ENCODE measurements at regions of chr19 and their contacts with region 1.

Region 1: GRCh38 chr19:45092747-45093678 is at the start of gene PPP1R37:
- DNase-seq: peak; percentile 71 to 95
- H3K4me3 ChIP-seq: peak within 1 kb of the TSS; percentile 96 to 99
- H3K27ac ChIP-seq: peak within 1 kb of the TSS; percentile 83 to 88
- H3K4me1 ChIP-seq: peaks cover 19 to 24% of the 10 kb centered on the region in 2 donors
- H3K27me3 ChIP-seq: no peaks in the 10 kb centered on the region
- CTCF ChIP-seq: peak in 2 of 3 experiments; percentile 40 to 62
- total RNA-seq, gene PPP1R37: 17.6 TPM

Region 2: GRCh38 chr19:44954824-44955586 is 138.0 kb before region 1 on chr19 and contains the start of gene CLPTM1:
- intact Hi-C with region 1: loop called (anchors 2 kb)
- DNase-seq: peak; percentile 87 to 98
- H3K4me3 ChIP-seq: peak within 1 kb of the TSS; percentile 73 to 98
- H3K27ac ChIP-seq: peak within 1 kb of the TSS; percentile 89 to 91
- H3K4me1 ChIP-seq: peaks cover 10 to 30% of the 10 kb centered on the region in 2 donors
- H3K27me3 ChIP-seq: no peaks in the 10 kb centered on the region
- CTCF ChIP-seq: peak in 1 of 3 experiments; percentile 28
- total RNA-seq, gene CLPTM1: 65.2 TPM

Region 3: GRCh38 chr19:45038931-45039893 is 53.8 kb before region 1 on chr19 and contains the start of gene CLASRP:
- intact Hi-C with region 1: loop called (anchors 1 kb)
- DNase-seq: peak; percentile 65 to 94
- H3K4me3 ChIP-seq: peak within 1 kb of the TSS; percentile 83 to 86
- H3K27ac ChIP-seq: peak within 1 kb of the TSS; percentile 91 to 96
- H3K4me1 ChIP-seq: peaks cover 5 to 22% of the 10 kb centered on the region in 2 donors
- H3K27me3 ChIP-seq: no peaks in the 10 kb centered on the region
- CTCF ChIP-seq: no peak
- total RNA-seq, gene CLASRP: 103 TPM

Region 4: GRCh38 chr19:45079063-45079910 is 13.7 kb before region 1 on chr19 and contains the start of gene GEMIN7:
- intact Hi-C with region 1: loop called (anchors 1 kb)
- DNase-seq: peak in 1 of 2 donors; percentile 84
- H3K4me3 ChIP-seq: peak within 1 kb of the TSS; percentile 86 to 91
- H3K27ac ChIP-seq: peak within 1 kb of the TSS in 1 of 2 donors; percentile 15
- H3K4me1 ChIP-seq: peaks cover 7 to 10% of the 10 kb centered on the region in 2 donors
- H3K27me3 ChIP-seq: no peaks in the 10 kb centered on the region
- CTCF ChIP-seq: peak in 1 of 3 experiments; percentile 16
- total RNA-seq, gene GEMIN7: 48.2 TPM

Region 5: DNA sequence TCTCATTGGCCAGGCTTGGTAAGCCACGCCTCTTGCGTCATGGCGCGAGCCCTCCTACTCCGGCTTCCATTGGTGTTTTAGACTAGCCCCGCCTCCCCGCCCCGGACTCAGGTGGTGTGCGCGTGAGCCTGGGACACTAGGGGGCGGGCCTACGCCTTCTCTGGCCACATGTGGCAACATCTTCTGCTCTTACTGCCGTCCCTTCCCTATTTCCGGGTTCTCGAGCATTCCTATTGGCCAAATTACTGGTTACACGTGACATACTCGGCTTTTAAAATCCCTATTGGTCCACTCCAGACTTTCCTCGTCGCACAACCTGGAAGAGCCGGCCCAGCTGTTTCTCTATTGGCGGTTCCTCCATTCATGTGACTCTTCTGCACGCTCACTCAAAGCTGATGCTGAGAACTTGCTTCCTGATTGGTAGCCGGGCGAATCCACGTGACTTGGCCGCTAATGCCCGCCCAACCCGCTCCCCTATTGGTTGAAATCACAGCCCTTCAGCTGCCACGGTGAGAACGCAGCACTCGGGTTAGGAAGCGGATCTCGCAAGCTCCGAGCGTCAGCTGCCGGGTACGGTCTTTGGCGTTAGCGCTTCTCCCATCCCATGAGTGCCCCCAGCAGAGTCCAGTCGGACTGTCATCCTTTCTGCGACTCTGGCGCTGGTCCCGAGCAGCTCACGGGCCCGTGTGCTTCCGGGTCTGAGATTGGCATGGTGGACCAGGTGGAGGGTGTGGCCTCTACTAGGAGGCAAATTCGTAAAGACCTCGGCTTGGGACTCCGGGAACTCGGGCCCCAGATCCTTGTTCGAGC is 85.5 kb after region 1 on chr19 and contains the start of gene BLOC1S3:
- intact Hi-C with region 1: loop called (anchors 1 kb)
- DNase-seq: peak; percentile 100
- H3K4me3 ChIP-seq: peak within 1 kb of the TSS; percentile 84 to 91
- H3K27ac ChIP-seq: peak within 1 kb of the TSS; percentile 96 to 99
- H3K4me1 ChIP-seq: peaks cover 3 to 24% of the 10 kb centered on the region in 2 donors
- H3K27me3 ChIP-seq: no peaks in the 10 kb centered on the region
- CTCF ChIP-seq: peak in 2 of 3 experiments; percentile 11 to 34
- total RNA-seq, gene BLOC1S3: 0.32 TPM

Region 6: DNA sequence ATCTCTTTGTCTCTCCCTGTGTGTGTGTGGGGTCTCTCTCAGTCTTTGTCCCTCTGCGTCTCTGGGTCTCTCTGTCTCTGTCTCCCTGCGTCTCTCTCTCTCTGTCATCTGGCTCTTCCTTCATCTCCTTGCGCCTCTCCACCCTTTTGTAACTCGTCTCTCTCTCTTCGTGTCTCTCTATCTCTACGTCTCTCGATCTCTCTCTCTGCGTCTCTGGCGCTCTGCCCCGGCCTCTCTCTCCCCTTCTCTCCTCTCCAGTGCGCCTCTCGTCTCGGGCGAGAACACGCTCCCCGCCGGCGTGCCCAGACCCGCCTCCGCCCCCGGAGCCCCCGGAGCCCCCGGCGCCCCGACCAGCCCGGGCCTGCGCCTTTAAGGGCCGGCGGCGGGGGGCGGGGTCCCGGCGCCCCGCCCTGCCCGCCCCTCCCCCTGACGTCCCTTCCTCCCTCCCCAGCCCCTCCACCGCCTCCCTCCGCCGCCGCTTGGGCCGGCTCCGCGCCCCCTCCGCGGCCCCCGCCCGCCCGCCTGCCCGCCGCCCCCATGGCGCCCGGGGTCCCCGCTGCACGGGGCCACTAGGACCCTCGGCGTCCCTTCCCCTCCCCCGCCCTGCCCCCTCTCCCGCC is 157.9 kb after region 1 on chr19 and contains the start of gene MARK4:
- intact Hi-C with region 1: loop called (anchors 2 kb)
- DNase-seq: peak in 1 of 2 donors; percentile 68
- H3K4me3 ChIP-seq: peak within 1 kb of the TSS; percentile 83 to 99
- H3K27ac ChIP-seq: peak within 1 kb of the TSS; percentile 58 to 65
- H3K4me1 ChIP-seq: peaks cover 2 to 26% of the 10 kb centered on the region in 2 donors
- H3K27me3 ChIP-seq: no peaks in the 10 kb centered on the region
- CTCF ChIP-seq: no peak
- total RNA-seq, gene MARK4: 22.8 TPM

Region 7: DNA sequence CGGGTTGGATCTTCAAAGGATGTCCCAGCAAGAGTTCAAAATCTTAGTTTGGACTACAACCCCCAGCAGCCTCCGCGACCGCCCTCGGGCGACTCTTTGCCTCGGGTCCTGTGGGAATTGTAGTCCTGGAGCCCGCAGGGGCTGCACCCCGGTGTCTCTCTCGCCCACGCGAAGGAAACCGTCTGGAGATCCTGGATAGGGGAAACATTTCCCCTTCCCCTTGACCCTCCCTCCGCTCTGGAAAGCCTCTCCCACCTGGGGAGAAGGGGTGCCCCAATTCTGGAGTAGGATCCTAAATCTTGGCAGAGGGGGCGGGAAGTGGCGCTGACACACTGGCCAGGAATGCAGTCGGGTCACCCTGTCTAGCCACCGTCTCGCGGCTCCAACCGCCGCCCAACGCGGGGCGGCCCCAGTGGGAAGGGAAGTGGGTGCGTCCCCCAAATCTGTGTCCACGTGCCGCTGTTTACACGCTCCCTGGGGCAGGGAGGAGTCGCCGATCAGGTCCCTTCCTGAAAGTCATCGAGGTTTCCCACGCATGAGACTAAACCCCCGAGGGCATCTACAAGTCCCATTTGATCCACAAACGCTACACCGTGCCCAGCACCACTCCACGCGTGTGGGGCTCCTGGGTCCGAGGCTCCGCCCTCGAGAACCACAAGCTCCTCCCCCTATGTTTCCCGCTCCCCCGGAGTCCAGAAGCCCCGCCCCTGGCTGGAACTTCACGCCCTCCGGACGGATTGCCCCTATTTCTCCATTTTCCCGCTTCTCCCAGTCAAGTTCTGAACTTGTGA is 312.6 kb after region 1 on chr19:
- intact Hi-C with region 1: loop called (anchors 5 kb)
- DNase-seq: peak; percentile 71 to 94
- H3K4me3 ChIP-seq: peak overlapping the region; percentile 68 to 86
- H3K27ac ChIP-seq: peak overlapping the region; percentile 93 to 97
- H3K4me1 ChIP-seq: peaks cover 8 to 28% of the 10 kb centered on the region in 2 donors
- H3K27me3 ChIP-seq: no peaks in the 10 kb centered on the region
- CTCF ChIP-seq: no peak